GM13976 (cell line): ENCODE measurements at regions of chr12 and their contacts with region 1.

Region 1: DNA sequence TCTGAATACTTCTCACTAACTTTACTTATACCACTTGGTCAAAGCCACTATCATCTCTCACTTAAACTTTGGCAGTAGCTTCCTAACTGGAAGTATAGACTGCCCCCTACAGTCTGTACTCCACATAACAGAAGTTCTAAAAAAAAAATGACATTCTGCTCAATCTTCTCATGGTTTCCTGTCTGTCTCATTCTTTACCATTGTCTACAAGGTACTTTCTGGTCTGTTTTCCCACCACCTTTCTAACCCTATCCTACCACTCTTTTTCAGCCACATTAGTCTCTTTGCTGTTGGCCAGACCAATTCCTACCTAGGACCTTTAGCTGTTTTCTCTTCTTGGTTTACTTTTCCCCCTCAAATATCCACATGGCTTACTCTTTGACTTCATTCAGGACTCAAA is 14.7 kb downstream of the CPSF6 start:
- DNase-seq: peak; percentile 53
- CTCF ChIP-seq: peak; percentile 46

Region 2: DNA sequence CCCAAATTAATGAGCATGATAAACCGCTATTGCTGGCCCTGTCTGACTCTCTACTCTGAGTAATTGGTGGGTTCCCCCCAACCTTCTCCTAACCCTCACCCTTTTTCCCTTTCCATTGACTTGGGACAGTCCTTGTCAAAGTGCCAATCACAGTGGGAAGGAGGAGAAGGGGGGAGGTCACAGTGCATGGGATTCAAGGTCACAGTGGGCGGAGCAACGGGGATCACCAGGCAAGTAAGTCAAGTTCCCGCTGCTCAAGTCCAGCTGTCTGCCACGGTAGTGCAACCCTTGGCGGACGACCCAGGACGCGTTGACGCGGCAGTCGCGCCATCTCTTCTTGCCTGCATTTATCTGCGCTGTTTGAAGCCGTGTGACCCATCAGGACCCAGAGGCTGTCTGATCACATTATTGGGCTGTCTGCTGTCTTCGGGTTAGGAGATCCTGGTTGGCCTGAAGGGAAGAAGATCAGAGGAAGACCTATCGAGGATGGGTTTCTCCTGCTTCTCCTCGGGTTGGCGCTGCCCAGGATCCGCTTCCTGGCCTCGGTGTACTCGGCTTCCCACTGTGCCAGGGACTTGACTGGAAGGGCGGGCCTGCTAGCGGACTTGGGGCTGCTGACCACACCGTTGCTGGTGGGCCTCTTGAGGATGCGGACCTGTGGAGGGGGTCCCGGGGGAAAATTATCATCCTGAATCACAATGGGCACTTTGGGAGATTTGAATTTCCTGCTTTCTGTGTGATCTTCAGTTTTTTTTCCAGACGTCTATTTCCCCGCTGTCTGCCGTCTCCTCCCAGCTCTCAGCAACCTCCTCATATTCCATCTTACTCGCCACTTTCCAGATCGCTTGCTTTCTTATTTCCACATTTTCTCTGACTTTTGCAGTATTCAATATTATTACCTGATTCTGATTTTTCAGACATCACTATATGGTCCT is 449.1 kb before region 1 on chr12:
- in situ Hi-C with region 1: no loop called
- DNase-seq: no peak
- CTCF ChIP-seq: no peak

Region 3: DNA sequence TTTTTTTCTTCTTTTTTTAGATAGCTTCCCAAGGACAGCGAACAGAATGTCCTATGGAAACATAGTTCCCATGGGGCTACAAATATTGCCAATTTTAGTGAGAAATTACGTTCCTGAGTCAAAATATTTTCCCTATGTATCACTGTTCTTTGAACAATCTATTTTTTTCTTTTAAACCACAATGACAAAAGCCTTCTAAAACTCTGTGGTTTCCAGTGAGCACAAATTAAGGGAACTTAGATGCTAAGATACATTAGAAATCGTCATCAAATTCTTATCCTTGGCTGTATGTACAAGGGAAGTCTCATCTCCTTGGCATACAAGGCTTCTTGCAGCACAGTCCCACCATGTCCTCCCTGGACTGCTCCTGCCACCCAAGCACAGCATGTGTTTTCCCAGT is 339.0 kb before region 1 on chr12:
- in situ Hi-C with region 1: no loop called
- DNase-seq: no peak
- CTCF ChIP-seq: no peak

Region 4: GRCh38 chr12:69157023-69157655 is 96.9 kb before region 1 on chr12:
- in situ Hi-C with region 1: loop called (anchors 10 kb)
- DNase-seq: peak; percentile 82
- CTCF ChIP-seq: peak; percentile 99

Region 5: GRCh38 chr12:69211160-69211559 is 42.9 kb before region 1 on chr12:
- in situ Hi-C with region 1: no loop called
- DNase-seq: no peak
- CTCF ChIP-seq: no peak